ENCODE measurements at regions of chr1 and their contacts with region 1.

Region 1: GRCh38 chr1:15835741-15836510 is 11.6 kb upstream of the SPEN start:
- DNase-seq: peak; percentile 91
- H3K4me3 ChIP-seq: peak overlapping the region; percentile 80
- CTCF ChIP-seq: no peak

Region 2: GRCh38 chr1:15847100-15847892 is 11.4 kb after region 1 on chr1 and contains the start of gene SPEN:
- CTCF ChIA-PET with region 1: interaction called, 5 read pairs
- POLR2A ChIA-PET with region 1: interaction called, 10 read pairs
- DNase-seq: no peak
- H3K4me3 ChIP-seq: peak within 1 kb of the TSS; percentile 92
- CTCF ChIP-seq: no peak